ENCODE measurements at regions of chr17 and their contacts with region 1.

Region 1: DNA sequence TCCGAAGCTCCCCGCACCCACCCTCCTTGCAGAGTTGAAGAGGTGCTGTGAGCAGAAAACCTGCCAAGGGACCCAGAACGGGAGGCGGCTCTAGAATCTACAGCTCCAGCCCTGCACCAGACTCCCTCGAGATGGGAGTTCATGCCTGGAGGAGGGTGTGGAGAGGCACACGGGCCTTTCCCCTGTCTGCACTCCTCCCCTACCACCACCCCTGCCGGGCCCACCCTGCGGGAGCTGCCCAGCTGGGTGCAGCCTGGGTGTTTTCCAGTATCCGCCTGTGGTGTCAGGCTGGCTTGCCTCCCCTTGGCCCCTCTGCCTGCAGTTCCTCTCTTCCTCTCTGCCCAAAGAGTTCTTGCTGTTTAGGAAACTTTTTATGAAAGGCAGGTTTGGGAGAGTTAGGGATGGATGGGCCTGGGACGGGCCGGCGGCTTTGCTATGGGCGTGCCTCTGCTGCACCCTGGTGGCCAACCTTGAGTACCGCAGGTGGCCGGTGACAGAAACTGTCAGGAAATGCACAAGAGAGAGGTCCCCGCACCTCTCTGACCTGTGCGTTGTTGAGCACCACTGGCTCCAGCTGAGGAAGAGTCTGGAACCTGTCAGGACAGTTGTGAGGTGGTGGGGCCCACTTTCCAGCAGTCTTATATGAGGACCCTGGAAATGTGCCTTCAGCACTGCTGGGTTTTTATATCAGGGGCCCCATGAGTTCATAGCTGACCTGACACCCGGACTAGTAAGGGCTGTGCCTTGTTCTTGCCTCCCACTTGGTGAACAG is 354.1 kb downstream of the SEC14L1 start:
- DNase-seq: peak; percentile 91
- H3K4me3 Mint-ChIP-seq: no peak overlapping the region
- H3K27ac Mint-ChIP-seq: peak overlapping the region; percentile 76
- H3K4me1 Mint-ChIP-seq: peaks cover 20% of the 10 kb centered on the region
- H3K27me3 Mint-ChIP-seq: no peaks in the 10 kb centered on the region

Region 2: GRCh38 chr17:77429919-77430752 is 64.7 kb before region 1 on chr17:
- intact Hi-C with region 1: loop called (anchors 1 kb)
- DNase-seq: peak; percentile 94
- H3K4me3 Mint-ChIP-seq: peak overlapping the region; percentile 35
- H3K27ac Mint-ChIP-seq: peak overlapping the region; percentile 62
- H3K4me1 Mint-ChIP-seq: peaks cover 72% of the 10 kb centered on the region
- H3K27me3 Mint-ChIP-seq: no peaks in the 10 kb centered on the region

Region 3: GRCh38 chr17:77465358-77466041 is 29.4 kb before region 1 on chr17:
- intact Hi-C with region 1: loop called (anchors 1 kb)
- DNase-seq: peak; percentile 93
- H3K4me3 Mint-ChIP-seq: peak overlapping the region; percentile 77
- H3K27ac Mint-ChIP-seq: peak overlapping the region; percentile 91
- H3K4me1 Mint-ChIP-seq: peaks cover 71% of the 10 kb centered on the region
- H3K27me3 Mint-ChIP-seq: no peaks in the 10 kb centered on the region

Region 4: GRCh38 chr17:77528516-77529327 is 33.9 kb after region 1 on chr17:
- intact Hi-C with region 1: no loop called
- DNase-seq: peak; percentile 72
- H3K4me3 Mint-ChIP-seq: peak overlapping the region; percentile 32
- H3K27ac Mint-ChIP-seq: no peak overlapping the region
- H3K4me1 Mint-ChIP-seq: no peaks in the 10 kb centered on the region
- H3K27me3 Mint-ChIP-seq: peaks cover 23% of the 10 kb centered on the region